AG04450 (cell line): ENCODE measurements at regions of chr14 and their contacts with region 1.

Region 1: GRCh38 chr14:59086241-59086882 is 102.1 kb upstream of the DAAM1 start:
- DNase-seq: peak; percentile 8
- H3K4me3 ChIP-seq: no peak overlapping the region
- H3K27ac ChIP-seq: no peak overlapping the region
- H3K27me3 ChIP-seq: no peaks in the 10 kb centered on the region
- CTCF ChIP-seq: no peak

Region 2: DNA sequence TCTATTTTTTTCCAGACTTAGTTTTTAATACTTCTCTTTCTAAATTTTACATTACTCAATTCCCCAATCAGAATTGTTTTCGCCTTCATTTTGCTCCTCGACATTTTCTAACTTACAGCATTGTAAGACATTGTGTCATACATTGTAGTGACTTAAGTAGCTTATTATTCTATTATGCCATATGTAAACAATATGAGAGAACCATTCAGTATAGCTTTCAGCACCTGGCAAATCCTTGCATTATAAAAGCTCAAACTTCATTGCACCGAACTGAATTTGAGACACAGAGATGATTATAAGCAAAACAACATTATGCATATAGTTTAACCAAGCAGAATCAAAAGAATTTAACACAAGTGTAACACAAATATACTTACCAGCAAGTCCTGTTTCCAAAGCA is 1864.4 kb before region 1 on chr14:
- CTCF ChIA-PET with region 1: no interaction called
- POLR2A ChIA-PET with region 1: interaction called, 11 read pairs
- DNase-seq: no peak
- H3K4me3 ChIP-seq: no peak overlapping the region
- H3K27ac ChIP-seq: no peak overlapping the region
- H3K27me3 ChIP-seq: no peaks in the 10 kb centered on the region
- CTCF ChIP-seq: no peak

Region 3: DNA sequence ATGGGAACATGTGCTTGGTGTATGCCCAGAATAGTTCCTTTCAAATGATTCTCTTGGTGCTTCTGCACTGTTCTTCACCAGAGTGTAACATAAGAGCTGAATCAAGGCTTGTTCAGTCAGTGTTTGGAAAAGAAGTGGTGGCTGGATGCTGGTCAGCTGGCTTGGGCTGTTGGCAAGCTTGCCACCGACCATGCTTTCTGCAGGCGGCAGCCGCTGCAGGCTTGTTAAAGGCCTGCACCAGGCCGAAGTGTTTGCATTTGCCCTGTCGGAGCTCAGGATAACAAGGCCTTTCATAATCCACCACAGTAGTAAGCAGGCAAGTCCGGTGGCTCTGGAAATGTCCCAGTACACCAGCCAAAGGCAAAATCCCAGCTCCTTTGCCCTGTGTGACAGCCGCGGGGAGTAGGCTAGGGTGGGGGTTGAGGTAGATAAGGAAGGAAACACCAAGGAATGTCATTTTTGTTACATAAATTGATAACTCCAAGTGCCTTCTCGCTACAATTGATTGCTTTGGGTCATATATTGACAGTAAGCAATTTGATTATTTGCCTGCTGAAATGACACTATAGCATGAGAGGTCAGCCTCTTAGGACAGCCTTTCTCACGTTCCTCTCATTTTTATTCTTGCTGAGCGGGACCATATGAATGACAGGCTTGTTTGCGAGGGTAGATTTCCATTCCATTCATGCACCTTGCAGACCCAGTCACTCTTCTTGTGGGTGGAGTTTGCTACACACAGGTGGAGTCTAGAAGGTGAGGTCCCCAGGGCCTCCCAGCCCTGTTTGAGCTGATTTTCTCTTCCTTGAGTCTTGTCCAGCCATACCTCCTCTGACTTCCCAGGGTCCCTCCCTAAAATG is 129.2 kb after region 1 on chr14:
- CTCF ChIA-PET with region 1: no interaction called
- POLR2A ChIA-PET with region 1: no interaction called
- DNase-seq: peak; percentile 47
- H3K4me3 ChIP-seq: no peak overlapping the region
- H3K27ac ChIP-seq: no peak overlapping the region
- H3K27me3 ChIP-seq: no peaks in the 10 kb centered on the region
- CTCF ChIP-seq: no peak